Motor neuron (in vitro differentiated cells): ENCODE measurements at regions of chr15 and their contacts with region 1.

Region 1: DNA sequence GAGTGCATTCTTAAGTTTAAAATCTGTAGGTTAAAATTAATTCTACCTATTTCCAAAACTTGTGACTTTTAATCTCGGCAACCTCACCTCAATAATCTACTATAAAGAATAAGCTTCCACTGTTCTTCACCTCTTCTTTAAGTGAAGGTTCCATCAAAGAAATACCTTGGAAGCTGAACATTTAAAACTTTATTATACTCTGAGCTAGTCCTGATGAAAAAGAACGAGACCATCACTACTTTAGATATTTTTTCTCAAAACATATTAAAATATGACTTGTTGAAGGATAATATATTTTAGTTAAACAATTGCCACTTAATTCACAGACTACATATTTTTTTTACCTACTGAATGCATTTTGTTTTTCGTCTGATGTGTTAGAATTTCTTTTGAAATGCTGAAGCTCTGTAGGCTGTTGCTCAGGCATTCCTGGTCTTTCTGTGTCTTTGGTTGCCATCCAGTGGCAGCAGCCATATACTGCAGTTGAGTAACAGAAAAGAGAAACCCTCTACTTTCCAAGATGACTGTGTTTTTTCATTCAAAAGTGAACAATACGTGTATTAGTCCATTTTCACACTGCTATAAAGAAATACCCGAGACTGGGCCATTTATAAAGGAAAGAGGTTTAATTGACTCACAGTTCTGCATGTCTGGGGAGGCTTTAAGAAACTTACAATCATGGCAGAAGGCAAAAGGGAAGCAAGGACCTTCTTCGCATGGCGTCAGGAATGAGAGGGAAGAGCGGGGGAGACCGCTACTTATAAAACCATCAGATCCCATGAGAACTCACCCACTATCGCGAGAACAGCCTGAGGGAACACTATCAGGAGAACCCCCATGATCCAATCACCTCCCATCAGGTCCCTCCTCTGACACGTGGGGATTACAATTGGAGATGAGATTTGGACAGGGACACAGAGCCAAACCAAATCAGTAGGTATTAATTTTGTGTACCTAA is 4.5 kb upstream of the GOLGA8B start:
- ATAC-seq: peak; percentile 27 to 76 (median 48)
- H3K4me3 ChIP-seq: peak overlapping the region in 4 of 5 donors; percentile 16 to 37 (median 18)
- H3K27ac ChIP-seq: no peak overlapping the region
- H3K4me1 ChIP-seq: peaks cover 0 to 20% of the 10 kb centered on the region in 2 donors

Region 2: DNA sequence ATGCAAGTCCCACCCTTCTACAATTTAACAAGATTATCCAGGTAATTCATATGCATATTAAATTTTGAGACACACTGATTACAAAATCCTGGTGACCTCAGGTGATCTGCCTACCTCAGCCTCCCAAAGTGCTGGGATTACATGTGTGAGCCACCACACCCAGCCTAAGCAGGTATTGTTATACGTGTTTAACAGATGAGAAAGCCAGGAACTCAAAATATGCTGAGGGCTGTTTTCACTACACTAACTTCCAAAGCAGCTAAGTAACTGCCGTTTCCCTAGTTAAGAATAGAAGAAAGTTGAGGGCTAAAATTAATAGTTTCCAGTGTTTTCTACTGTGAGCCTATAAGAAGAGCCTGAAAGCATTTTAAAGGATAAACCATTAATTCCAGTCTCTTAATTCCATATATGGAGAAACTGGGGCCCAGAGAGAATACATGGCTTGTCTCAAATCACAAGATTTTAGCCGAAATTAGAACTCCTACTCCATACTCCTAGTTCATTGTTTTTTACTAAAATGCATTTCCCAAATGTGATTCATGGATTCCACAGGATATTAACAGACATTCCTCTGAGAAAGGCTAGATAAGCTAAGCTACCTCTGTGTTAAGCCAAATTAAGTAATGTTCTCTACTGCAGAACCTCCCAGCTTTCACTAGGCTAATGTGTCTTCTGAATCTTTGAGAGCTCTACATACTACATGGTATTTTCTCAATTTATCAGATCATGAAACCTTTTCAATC is 532.0 kb before region 1 on chr15:
- in situ Hi-C with region 1: loop called in 1 of 9 experiments (anchors 25 kb)
- ATAC-seq: peak in 1 of 8 experiments; percentile 21
- H3K4me3 ChIP-seq: no peak overlapping the region
- H3K27ac ChIP-seq: no peak overlapping the region
- H3K4me1 ChIP-seq: no peaks in the 10 kb centered on the region

Region 3: DNA sequence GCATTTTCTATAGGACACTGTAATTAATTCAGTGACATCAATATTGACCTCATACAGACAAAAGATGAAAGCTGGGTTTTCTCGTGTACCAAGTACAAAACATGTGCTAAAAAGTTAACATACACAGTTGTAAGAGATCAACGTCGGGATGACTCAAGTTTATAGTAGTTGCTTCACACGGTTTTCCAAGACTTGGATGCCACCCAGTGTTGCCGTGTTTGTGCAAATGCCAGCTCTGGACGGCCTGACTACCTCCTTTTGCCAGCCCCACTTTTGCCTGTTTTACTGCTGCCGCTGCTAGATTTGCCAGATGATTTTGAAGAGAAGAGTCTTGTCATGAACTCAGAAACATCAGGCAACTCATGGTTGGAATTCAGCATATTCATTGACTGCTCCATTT is 503.9 kb before region 1 on chr15:
- in situ Hi-C with region 1: loop called in 1 of 9 experiments (anchors 25 kb)
- ATAC-seq: peak in 2 of 8 experiments; percentile 25 to 79
- H3K4me3 ChIP-seq: no peak overlapping the region
- H3K27ac ChIP-seq: no peak overlapping the region
- H3K4me1 ChIP-seq: no peaks in the 10 kb centered on the region

Region 4: GRCh38 chr15:34367101-34368081 is 220.6 kb before region 1 on chr15 and contains the start of gene LPCAT4:
- in situ Hi-C with region 1: loop called in 2 of 9 experiments (anchors 25 kb)
- ATAC-seq: peak; percentile 77 to 91 (median 81)
- H3K4me3 ChIP-seq: peak within 1 kb of the TSS; percentile 71 to 94 (median 93)
- H3K27ac ChIP-seq: peak within 1 kb of the TSS; percentile 93 to 98
- H3K4me1 ChIP-seq: peaks cover 12 to 13% of the 10 kb centered on the region in 2 donors
- total RNA-seq, gene LPCAT4: 9.9 to 39.6 (median 21.8) TPM

Region 5: GRCh38 chr15:36251450-36251849 is 1663.5 kb after region 1 on chr15:
- in situ Hi-C with region 1: no loop called
- ATAC-seq: no peak
- H3K4me3 ChIP-seq: no peak overlapping the region
- H3K27ac ChIP-seq: no peak overlapping the region
- H3K4me1 ChIP-seq: peaks cover 6 to 19% of the 10 kb centered on the region in 2 donors